ENCODE measurements at regions of chr17 and their contacts with region 1.

Region 1: DNA sequence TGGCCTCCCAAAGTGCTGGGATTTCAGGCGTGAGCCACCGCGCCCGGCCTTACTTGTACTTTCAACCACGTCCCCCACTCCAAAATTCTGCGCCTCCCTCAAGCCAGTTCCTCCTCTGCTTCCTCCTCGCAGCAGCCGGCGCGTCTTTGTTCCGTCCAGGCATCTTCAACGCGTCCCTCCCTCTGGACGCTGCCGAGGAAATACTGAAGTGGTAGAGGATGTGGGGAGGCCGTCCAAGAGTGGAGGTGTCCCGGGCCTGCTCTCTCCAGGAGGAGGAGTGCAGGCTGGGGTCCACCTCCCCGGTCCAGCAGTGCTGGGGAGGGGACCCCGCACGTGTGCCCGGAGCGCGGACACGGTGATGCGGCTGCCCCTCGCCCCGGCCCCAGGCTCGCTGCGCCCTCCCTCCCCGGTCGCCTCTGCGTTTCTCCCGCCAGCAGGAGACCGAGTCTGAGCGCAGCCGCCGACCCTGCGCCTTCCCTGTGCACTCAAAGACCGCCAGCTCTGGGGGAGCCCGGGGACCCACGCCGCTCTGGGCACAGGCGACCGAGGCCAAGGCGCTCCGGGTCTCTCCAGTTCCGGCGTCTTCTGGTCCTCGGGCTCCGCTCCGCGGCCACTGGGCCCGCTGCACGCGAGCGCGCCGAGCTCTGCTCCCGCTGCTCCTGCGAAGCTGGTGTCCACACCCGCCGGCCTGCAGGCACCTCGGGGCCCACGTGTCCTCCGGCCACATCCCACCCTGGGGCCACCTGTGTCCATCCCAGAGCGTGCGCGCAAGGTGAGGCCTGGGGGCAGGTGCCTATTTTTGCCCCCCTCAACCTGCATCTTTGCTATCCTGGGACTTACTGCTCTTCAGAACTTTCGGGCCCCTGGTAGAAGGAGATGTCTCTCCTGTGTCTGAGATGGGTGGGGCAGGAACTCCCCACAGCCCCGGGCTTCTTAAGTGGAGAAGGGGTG is 31.7 kb downstream of the OSBPL7 start:
- DNase-seq: no peak
- H3K4me3 ChIP-seq: peak overlapping the region; percentile 31
- H3K27me3 ChIP-seq: peaks cover 22% of the 10 kb centered on the region
- CTCF ChIP-seq: peak; percentile 58

Region 2: GRCh38 chr17:47757386-47757785 is 32.5 kb before region 1 on chr17:
- CTCF ChIA-PET with region 1: interaction called, 4 read pairs
- POLR2A ChIA-PET with region 1: interaction called, 10 read pairs
- DNase-seq: no peak
- H3K4me3 ChIP-seq: no peak overlapping the region
- H3K27me3 ChIP-seq: peaks cover 5% of the 10 kb centered on the region; the same call in 1 of the 2 replicates
- CTCF ChIP-seq: no peak

Region 3: DNA sequence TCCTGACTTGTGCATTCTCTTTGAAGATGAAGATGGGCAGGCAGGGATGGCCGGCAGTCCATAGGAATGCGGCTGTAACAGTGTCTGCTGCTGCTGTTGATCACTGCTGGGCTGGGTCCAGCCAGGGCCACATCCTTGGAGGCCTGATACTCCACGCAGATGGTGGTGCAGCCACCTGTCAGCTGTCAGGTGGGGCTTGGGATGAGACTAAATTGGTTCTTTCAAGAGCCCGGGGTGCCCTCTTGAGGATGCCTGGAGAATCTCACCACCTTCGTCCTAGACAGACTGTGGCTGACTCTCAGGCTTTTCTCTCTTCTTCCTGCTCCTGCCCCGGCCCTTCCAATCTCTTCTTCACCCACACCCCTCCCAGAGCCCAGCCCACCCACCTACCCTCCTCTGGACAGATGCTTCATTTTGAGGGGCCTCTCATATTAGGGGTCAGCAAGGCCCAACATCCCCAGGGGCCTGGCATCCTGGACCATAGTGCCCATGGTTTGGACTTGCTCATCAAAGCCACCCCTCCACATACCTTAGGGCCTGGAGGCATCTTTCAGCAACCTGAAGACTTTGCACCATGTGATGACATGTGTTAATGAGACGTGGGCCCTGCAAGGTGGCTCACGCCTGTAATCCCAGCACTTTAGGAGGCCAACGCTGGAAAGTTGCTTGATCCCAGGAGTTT is 12.6 kb after region 1 on chr17:
- CTCF ChIA-PET with region 1: interaction called, 23 read pairs
- POLR2A ChIA-PET with region 1: no interaction called
- DNase-seq: no peak
- H3K4me3 ChIP-seq: no peak overlapping the region
- H3K27me3 ChIP-seq: peaks cover 15% of the 10 kb centered on the region
- CTCF ChIP-seq: peak; percentile 73

Region 4: DNA sequence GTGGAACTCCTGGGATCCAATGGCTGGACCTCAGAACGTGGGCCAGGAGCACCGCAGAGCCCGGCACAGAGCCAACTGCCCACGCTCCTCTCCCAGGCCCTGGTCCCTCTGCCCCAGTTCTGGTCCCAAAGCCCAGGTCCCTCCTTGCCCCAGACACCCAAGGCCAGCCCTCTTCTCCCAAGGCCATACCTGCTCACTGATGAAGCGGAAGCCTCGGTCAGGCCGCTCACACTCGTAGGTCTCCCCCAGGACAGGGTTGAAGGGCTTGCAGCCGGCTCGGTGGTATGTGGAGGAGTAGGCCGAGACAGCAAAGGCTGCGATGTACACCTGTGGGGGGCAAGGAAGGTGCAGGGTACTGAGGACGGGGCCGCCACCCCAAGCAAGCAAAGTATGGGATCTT is 23.2 kb after region 1 on chr17:
- CTCF ChIA-PET with region 1: no interaction called
- POLR2A ChIA-PET with region 1: no interaction called
- DNase-seq: no peak
- H3K4me3 ChIP-seq: no peak overlapping the region
- H3K27me3 ChIP-seq: no peaks in the 10 kb centered on the region
- CTCF ChIP-seq: no peak

Region 5: GRCh38 chr17:47862621-47863440 is 72.9 kb after region 1 on chr17:
- CTCF ChIA-PET with region 1: no interaction called
- POLR2A ChIA-PET with region 1: no interaction called
- DNase-seq: peak; percentile 54
- H3K4me3 ChIP-seq: no peak overlapping the region
- H3K27me3 ChIP-seq: no peaks in the 10 kb centered on the region
- CTCF ChIP-seq: no peak

Region 6: DNA sequence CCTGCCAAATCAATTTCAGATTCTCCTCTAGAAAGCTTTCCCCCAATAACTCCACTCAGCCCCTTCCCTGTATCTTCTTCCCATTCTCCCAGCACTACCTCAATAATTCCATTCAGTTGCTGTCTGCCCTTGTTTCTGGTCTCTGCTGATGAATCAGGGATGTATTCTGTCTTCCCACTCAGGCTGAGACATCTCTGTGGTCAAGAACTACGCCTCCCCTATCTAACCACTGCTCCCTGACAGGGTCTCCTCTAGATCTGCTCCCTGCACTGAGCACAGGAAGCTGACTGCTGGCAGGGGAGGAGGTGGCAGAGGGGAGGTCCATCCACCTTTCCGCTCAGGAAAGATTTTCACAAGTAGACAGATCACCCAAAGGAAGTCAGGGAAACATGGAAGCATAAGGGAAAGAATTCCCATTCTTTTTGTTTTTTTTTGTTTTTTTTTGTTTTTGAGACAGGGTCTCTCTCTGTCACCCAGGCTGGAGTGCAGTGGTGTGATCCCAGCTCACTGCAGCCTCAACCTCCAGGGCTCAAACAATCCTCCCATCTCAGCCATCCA is 89.2 kb after region 1 on chr17:
- CTCF ChIA-PET with region 1: no interaction called
- POLR2A ChIA-PET with region 1: no interaction called
- DNase-seq: no peak
- H3K4me3 ChIP-seq: no peak overlapping the region
- H3K27me3 ChIP-seq: no peaks in the 10 kb centered on the region
- CTCF ChIP-seq: no peak

Region 7: GRCh38 chr17:47970704-47971463 is 181.0 kb after region 1 on chr17 and contains the start of gene CDK5RAP3:
- CTCF ChIA-PET with region 1: no interaction called
- POLR2A ChIA-PET with region 1: no interaction called
- DNase-seq: peak; percentile 91
- H3K4me3 ChIP-seq: peak within 1 kb of the TSS; percentile 72
- H3K27me3 ChIP-seq: no peaks in the 10 kb centered on the region
- CTCF ChIP-seq: peak; percentile 94
- polyA plus RNA-seq, gene CDK5RAP3: 76.6 and 98.1 TPM in 2 replicates